ENCODE measurements at regions of chr6 and their contacts with region 1.

Region 1: DNA sequence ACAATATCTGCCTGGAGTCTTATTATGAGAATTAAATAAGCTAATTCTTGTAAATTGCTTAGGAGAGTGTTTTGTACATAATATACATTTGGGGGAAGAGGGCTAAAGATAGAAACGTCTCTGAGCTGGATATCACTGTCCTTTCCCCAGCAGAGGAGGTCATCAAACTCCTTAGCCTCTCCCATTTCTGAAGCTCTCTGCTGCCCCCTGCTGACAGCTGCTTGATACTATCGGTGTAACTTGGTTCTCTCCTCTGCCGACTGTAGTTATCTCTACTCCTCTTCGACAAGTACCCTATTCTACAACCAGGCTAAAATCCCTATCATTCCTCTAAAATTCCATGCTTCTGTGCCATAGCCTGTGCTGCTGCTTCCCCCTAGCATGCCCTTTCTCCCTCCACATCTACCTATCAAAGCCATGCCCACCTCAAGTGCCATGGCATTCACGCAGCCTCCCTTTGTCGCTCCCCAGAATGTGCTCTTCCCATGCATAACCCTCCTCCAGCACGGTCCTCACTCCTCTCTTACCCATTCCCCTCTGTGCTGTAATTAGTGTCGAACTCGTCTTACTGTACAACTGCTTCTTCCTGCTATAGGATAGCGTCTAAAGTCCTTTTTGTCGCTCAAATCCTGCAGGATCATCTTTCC is 101.2 kb downstream of the EPM2A start:
- DNase-seq: peak; percentile 82
- ATAC-seq: peak; percentile 85

Region 2: GRCh38 chr6:144726129-144726522 is 908.0 kb before region 1 on chr6:
- intact Hi-C with region 1: no loop called
- DNase-seq: no peak
- ATAC-seq: no peak

Region 3: DNA sequence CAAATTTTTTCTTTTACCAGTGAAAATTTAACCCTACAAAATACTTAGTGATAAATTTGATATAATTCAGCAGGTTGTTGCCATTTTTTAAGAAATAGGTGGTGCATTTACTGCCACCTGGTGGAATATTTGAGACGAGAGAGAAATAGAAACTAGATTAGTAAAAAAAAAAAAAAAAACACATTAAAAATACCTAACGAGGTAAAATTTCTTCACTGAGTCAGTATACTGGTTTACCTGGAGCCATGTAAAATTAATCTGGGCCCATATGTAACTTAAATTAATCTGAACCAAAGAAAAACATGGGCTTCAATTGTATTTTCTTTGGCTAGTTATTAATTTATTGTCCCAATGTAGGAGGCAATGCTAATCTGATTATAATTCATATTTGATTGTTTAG is 419.5 kb before region 1 on chr6:
- intact Hi-C with region 1: loop called (anchors 5 kb)
- DNase-seq: no peak
- ATAC-seq: no peak

Region 4: DNA sequence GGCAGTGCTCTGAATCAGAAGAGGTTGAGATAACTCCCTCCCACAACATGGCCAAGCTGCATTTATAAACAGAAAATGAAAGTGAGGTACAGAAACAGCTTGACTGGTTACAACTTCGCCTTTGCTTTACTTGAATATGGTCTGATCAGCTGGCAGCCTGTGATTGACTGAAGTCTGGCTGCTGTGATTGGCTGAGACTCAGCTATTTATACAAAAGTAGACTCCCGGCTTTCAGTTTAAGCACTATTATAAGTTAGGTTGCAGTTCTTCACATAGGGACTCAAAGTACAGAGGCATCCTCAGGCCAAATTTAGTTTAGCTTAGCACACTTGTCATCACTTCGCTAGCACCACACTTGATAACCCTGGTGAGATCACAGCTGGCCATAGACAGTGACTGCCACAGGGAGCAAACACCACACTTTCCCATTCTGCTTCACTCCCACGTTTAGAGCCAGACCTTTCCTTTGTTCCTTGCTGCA is 261.4 kb before region 1 on chr6:
- intact Hi-C with region 1: loop called (anchors 5 kb)
- DNase-seq: no peak
- ATAC-seq: peak; percentile 98

Region 5: GRCh38 chr6:145453376-145453775 is 180.7 kb before region 1 on chr6:
- intact Hi-C with region 1: no loop called
- DNase-seq: no peak
- ATAC-seq: no peak

Region 6: DNA sequence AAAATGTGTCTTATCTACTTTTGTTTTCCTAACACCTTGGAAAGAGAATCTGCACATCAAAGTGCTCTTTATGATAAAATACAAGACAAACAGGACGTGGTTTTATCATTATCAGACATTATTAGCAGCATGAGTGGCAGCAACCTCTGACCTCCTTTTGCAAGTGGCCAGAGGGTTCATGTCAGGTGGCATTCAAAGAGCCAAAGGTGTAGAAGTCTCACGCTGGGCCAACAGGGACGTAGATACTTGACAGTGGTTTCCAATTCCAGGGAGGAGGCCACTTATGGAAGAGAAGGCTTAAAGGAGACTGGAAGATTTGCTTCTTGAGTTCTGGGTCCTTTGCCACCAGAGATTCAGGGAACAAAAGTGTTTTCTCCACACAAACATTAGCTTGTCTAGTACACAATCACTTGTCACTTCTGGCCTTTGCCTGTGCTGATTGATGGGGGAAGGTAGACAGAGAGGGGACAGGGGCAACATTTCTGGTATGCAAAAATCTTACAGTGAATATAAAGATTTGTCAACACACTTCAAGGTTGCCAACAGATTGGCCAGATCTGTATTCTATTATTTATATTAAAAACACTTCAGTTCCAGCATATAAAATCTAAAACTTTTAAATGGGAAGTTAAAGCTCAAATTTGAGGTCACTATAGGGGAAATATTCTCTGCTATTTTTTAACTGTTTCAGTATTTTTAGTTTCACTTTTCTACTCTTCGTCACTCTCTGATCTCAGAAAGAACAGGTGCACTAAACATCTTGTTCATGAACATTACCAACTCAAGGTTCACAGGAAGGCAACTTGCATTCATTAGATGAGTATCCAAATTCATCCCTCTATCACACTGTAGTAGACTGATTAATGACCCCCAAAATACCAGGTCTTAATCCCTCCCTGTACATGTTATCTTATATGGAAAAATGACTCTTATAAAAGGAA is 232.6 kb after region 1 on chr6:
- intact Hi-C with region 1: no loop called
- DNase-seq: no peak
- ATAC-seq: no peak

Region 7: GRCh38 chr6:145960918-145961589 is 326.9 kb after region 1 on chr6:
- intact Hi-C with region 1: no loop called
- DNase-seq: peak; percentile 57
- ATAC-seq: no peak